GM10248 (cell line): ENCODE measurements at regions of chr5 and their contacts with region 1.

Region 1: GRCh38 chr5:113612060-113612496 is 98.6 kb downstream of the YTHDC2 start:
- DNase-seq: peak; percentile 48
- CTCF ChIP-seq: peak; percentile 57

Region 2: DNA sequence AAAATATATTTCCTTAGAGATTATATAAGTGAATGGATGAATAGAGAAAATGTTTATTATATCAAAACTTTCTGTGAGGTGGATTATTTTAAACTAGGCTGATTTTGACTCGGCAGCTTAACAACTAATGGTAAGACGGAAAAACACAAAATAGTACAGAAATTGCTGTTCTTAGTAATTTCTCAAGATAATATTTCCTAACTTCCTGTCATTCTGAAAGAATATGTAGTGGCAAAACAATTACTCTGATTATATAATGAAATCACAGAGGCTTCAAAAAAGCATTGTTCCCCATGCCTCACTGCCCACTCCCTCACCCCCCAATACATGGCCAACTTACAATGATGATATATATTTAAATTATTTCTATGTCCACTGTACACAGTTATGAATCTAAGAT is 13.2 kb before region 1 on chr5:
- CTCF ChIA-PET with region 1: interaction called, 14 read pairs
- POLR2A ChIA-PET with region 1: no interaction called
- DNase-seq: no peak
- CTCF ChIP-seq: no peak

Region 3: DNA sequence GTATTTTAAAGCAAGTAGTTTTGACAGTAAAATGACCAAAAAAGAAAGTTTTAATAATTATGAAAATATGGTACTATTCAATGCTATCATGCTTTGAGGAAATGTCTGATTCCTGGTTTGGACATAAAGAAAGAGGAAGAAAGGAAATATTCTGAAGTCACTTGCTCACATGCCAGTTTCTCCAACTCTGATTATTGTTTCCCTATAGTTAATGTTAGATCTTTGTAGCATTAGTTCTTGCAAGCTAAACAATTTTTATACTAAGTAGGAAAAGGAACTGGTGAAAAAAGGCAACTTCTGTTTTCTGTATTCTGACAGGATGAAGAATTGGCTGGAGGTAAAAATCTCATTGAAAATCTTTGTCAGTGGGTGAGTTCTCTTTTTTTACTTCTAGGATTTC is 20.9 kb after region 1 on chr5:
- CTCF ChIA-PET with region 1: interaction called, 15 read pairs
- POLR2A ChIA-PET with region 1: no interaction called
- DNase-seq: no peak
- CTCF ChIP-seq: no peak

Region 4: DNA sequence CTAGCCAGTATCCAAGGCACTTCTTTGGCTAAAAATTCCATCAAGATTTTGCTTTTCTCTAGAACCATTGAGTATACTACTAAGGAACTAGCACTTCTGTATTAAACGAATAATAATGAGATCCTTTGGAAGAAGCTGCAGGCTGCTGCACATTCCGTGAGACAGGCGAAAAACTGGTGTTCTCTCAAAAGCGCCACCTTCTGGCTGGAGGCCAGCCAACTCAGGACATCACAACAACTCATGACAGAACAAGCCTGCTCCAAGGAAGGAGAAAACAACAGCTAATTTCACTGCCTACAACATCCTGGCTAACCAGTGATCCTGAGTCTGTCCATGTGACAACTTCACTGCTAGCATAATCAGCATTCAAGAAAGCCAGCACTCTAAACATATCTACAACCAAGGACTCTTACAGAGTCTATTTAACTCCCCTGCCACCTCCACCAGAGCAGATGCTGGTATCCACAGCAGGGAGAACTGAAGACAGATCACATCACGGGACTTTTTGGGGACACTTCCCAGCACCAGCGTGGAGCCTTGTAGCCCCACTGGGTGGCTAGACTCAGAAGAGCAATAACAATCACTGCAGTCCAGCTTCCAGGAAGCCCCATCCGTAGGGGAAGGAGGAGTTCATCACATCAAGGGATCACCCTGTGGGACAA is 51.9 kb after region 1 on chr5:
- CTCF ChIA-PET with region 1: interaction called, 31 read pairs
- POLR2A ChIA-PET with region 1: no interaction called
- DNase-seq: peak; percentile 15
- CTCF ChIP-seq: peak; percentile 52